ENCODE measurements at regions of chr1 and their contacts with region 1.

Region 1: GRCh38 chr1:201999625-202000238 is 10.7 kb upstream of the ELF3 start:
- DNase-seq: peak; percentile 84

Region 2: DNA sequence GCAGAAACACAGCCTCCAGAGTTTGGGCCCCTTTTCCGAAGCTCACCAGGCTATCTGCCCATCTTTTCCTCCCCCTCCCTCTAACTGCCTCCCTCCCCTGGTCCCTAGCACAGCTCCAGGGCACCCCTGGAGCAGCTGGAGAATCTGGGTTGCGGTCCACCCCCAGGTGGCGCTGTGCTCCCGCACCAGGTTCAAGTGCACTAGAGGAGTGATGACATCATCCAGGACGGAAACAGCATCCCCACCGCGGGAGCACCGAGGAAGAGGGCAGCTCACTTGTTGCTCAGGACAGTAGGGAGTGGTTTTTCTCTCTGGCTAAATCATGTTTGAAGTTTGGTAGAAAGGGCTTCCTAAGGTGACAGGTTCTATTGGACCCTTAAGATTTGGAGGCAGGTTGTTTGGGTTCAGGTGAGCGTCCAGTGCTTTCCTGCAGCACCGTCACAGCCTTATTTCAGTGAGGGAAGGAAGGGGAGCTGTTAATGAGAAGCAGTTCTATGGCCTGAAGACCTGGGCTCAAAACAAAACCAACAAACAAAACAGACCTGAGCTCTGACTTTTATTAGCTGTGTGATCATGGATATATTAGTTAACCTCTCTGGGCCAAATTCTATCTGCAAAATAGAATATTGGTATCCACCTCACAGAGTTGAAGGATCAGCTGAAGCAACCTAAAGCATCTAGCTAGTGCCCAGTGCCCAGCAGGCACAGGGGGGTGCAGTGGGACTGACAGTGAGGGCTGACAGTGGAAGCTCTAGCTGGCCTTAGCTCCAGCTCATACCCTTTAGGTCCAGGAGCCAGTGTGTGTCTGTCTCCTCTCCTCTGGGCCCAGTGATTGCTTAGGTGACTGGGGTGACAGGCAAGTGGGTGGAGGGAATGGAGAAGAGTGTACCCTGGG is 103.6 kb before region 1 on chr1:
- CTCF ChIA-PET with region 1: interaction called, 11 read pairs
- POLR2A ChIA-PET with region 1: no interaction called
- DNase-seq: peak; percentile 96

Region 3: GRCh38 chr1:201989354-201990128 is 10.2 kb before region 1 on chr1:
- CTCF ChIA-PET with region 1: interaction called, 10 read pairs
- POLR2A ChIA-PET with region 1: no interaction called
- DNase-seq: no peak

Region 4: DNA sequence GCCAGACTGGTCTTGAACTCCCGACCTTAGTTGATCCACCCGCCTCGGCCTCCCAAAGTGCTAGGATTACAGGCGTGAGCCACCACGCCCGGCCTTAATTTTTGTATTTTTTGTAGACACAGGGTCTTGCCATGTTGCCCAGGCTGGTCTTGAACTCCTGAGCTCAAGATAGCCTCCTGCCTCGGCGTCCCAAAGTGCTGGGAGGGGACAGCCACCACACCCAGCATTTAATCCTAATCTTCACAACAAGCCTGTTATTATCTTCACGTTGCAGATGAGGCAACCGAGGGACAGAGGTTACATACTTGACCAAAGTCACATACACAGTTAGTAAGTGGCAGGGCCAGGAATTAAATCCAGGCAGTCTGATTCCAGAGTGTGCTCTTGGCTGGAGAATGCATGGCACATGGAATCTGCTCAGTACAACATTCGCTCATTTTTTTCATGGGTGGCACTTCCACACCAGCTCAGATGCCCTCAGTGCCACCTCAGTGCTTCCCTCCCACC is 118.2 kb after region 1 on chr1:
- CTCF ChIA-PET with region 1: interaction called, 26 read pairs
- POLR2A ChIA-PET with region 1: no interaction called
- DNase-seq: no peak

Region 5: GRCh38 chr1:202135221-202135721 is 135.5 kb after region 1 on chr1:
- CTCF ChIA-PET with region 1: interaction called, 16 read pairs
- POLR2A ChIA-PET with region 1: no interaction called
- DNase-seq: peak; percentile 90